ENCODE measurements at regions of chr14 and their contacts with region 1.

Region 1: DNA sequence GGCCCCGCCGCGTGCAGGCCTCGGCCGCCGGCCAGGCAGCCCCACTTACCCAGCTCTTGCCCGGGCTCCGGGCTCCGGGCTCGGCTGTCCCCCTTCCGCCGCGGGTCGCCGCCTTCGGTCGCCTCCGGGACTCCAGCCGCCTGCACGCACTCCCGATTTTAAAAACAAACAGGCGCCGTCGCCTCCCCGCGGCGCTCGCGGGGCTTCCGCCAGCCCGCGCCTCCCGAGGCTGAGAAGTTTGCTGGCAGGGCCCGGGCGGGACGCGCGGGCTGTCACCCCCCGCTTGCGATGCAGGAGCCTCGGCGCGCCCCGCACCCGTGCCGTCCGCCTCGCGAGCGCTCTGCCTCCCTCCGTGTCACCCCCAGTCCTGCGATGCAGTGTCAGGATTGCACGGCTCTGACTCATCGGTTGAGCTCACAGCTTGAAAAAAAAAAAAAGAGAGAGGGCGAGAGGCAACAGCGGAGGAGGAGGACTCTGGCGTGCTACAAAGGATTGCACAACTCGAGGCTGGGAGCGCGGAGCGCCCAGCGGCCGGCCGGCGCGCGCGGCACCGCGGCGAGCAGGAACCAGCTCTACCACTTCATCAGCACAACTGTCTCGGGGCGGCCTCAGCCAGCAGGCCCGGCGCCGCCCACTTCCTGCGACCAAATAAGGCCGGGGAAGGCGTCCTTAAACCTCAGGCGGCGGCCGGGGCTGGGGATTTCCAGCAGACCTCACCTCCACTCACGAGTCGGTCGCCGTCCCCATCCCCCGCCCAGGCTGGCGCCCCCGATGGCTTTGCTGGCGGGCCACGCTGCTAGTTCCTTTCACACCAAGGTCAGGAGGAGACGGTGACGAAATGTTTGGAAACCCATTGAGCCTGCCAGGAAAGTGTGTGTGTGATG is 45.8 kb upstream of the PNMA1 start:
- DNase-seq: peak; percentile 96 to 98
- H3K4me3 ChIP-seq: peak overlapping the region; percentile 64
- H3K4me3 Mint-ChIP-seq: peak overlapping the region; percentile 84
- H3K27ac Mint-ChIP-seq: peak overlapping the region; percentile 93
- H3K4me1 ChIP-seq: peaks cover 55% of the 10 kb centered on the region
- H3K4me1 Mint-ChIP-seq: peaks cover 34% of the 10 kb centered on the region
- H3K27me3 ChIP-seq: no peaks in the 10 kb centered on the region
- H3K27me3 Mint-ChIP-seq: no peaks in the 10 kb centered on the region
- CTCF ChIP-seq: peak in 1 of 2 experiments; percentile 19

Region 2: DNA sequence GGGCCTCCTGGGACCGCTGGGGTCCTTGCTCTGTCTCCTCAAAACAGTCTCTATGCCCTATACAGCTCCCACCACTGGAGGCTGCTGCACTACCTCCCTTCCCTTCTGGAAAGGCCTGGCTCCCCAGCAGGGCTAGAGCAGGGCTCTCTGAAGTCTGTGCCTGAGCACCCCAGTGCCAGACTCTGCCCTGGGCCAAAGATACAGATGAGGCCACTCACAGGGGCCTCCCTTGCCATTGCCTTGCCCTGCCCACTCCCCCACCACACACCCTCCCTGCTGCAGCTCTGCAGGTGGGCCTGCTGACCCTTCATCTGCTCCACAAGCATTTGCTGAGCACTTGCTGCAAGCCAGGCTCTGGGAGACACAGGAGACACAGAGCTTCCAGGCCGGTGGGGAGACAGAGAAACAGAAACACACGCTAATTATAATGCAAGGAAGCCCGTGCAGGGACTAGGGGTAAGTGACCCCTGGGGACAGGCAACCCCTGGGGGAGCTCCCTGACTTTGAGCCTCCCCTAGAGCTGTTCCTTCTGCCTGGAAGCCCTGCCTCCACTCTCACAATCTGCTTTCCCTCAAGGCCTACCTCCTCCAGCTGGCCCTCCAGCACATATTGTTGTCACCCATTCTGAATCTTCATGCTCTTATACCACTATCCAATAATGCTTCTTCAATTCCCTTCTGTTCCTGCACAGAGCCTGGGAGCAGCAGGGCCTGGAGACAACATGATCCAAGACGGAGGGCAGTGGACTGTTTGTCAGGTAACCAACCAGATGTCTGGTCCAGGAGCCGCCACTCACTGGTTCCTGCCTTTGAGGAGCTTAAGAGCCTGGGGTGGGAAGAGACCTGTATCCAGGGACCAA is 13.2 kb before region 1 on chr14:
- CTCF ChIA-PET with region 1: interaction called, 60 read pairs
- POLR2A ChIA-PET with region 1: interaction called, 3 read pairs
- intact Hi-C with region 1: loop called (anchors 1 kb)
- DNase-seq: no peak
- H3K4me3 ChIP-seq: no peak overlapping the region
- H3K4me3 Mint-ChIP-seq: no peak overlapping the region
- H3K27ac Mint-ChIP-seq: no peak overlapping the region
- H3K4me1 ChIP-seq: peaks cover 58% of the 10 kb centered on the region
- H3K4me1 Mint-ChIP-seq: peaks cover 24% of the 10 kb centered on the region
- H3K27me3 ChIP-seq: no peaks in the 10 kb centered on the region
- H3K27me3 Mint-ChIP-seq: no peaks in the 10 kb centered on the region
- CTCF ChIP-seq: peak in 1 of 2 experiments; percentile 31

Region 3: DNA sequence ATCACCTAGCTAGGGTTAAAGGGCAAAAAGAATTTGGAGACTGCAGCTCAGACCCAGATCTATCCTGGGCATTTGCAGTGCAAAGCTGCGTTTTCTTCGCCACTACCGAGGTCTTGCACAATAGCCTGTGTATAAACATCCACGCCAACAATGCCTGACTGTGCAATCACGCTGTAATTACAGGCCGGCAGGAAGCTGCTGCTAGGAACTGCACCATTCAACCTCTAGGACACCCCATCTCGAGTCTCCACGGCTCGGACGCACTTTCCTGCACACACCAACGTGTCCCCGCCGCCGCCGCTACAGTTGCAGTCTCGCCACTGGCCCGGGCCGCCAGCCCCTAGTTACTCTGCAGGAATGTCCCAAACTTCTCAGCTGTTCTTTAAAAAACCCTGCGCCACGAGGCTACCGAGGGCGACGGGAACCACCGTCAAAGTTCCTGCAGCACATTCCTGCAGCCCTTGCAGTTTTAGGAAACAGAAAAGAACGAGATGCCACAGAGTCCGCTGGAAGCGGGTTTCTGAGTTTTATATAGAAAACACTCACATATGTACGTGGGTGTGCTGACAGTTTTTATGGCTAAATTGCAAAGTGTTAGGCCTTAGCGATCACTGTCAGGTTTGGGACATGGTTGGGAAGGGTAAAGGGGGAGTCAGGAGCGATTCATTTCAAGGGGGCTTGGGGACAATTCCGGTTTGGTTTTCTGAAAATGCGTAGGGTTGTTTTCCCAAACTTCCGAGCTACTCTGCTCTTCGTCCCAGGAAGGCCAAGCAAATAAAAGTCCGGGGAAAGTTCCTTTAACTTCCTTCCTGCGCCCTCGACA is 26.1 kb after region 1 on chr14:
- CTCF ChIA-PET with region 1: interaction called, 6 read pairs
- POLR2A ChIA-PET with region 1: interaction called, 25 read pairs
- intact Hi-C with region 1: loop called (anchors 1 kb)
- DNase-seq: peak; percentile 84 to 88
- H3K4me3 ChIP-seq: peak overlapping the region; percentile 64
- H3K4me3 Mint-ChIP-seq: peak overlapping the region; percentile 92
- H3K27ac Mint-ChIP-seq: peak overlapping the region; percentile 77
- H3K4me1 ChIP-seq: peaks cover 57% of the 10 kb centered on the region
- H3K4me1 Mint-ChIP-seq: peaks cover 47% of the 10 kb centered on the region
- H3K27me3 ChIP-seq: no peaks in the 10 kb centered on the region
- H3K27me3 Mint-ChIP-seq: no peaks in the 10 kb centered on the region
- CTCF ChIP-seq: peak in 1 of 2 experiments; percentile 20

Region 4: GRCh38 chr14:73825551-73826188 is 65.7 kb after region 1 on chr14:
- CTCF ChIA-PET with region 1: interaction called, 4 read pairs
- POLR2A ChIA-PET with region 1: no interaction called
- intact Hi-C with region 1: loop called (anchors 1 kb)
- DNase-seq: peak; percentile 79 to 86
- H3K4me3 ChIP-seq: no peak overlapping the region
- H3K4me3 Mint-ChIP-seq: no peak overlapping the region
- H3K27ac Mint-ChIP-seq: no peak overlapping the region
- H3K4me1 ChIP-seq: peaks cover 4% of the 10 kb centered on the region; the same call in 1 of the 2 replicates
- H3K4me1 Mint-ChIP-seq: peaks cover 8% of the 10 kb centered on the region
- H3K27me3 ChIP-seq: no peaks in the 10 kb centered on the region
- H3K27me3 Mint-ChIP-seq: no peaks in the 10 kb centered on the region
- CTCF ChIP-seq: peak; percentile 89 to 93

Measured in Caco-2 (cell line).